Right ventricle myocardium superior (tissue), 1 donor: ENCODE measurements at regions of chr11 and their contacts with region 1.

Region 1: GRCh38 chr11:12673924-12674570 is at the start of gene TEAD1:
- DNase-seq: peak; percentile 96
- ATAC-seq: peak; percentile 98
- total RNA-seq, gene TEAD1: 107 TPM

Region 2: GRCh38 chr11:12319988-12320387 is 354.1 kb before region 1 on chr11:
- intact Hi-C with region 1: loop called (anchors 10 kb)
- DNase-seq: no peak
- ATAC-seq: no peak

Region 3: GRCh38 chr11:12411806-12412727 is 262.0 kb before region 1 on chr11:
- intact Hi-C with region 1: loop called (anchors 10 kb)
- DNase-seq: peak; percentile 68
- ATAC-seq: peak; percentile 83

Region 4: DNA sequence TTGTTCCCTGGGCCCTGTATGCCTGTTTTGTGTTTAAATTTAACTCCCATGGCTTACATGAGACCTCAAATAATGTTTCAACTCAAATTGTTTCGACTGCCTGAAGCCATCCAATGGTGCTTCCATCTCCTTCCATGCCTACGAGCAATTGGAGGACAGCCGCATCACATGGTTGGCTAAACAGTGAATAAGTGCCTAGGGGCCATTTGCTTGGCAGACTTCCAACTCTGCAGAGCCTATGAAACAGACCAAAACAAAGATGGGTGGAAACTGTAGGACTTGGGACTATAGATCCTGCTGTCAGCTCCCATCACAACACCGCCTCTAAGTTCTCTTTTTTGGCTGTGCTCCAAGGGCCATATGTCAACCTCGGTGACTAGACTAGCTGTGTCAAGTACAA is 212.5 kb before region 1 on chr11:
- intact Hi-C with region 1: no loop called
- DNase-seq: no peak
- ATAC-seq: no peak

Region 5: GRCh38 chr11:12746593-12747097 is 72.6 kb after region 1 on chr11:
- intact Hi-C with region 1: loop called (anchors 5 kb)
- DNase-seq: peak; percentile 83
- ATAC-seq: peak; percentile 60

Region 6: DNA sequence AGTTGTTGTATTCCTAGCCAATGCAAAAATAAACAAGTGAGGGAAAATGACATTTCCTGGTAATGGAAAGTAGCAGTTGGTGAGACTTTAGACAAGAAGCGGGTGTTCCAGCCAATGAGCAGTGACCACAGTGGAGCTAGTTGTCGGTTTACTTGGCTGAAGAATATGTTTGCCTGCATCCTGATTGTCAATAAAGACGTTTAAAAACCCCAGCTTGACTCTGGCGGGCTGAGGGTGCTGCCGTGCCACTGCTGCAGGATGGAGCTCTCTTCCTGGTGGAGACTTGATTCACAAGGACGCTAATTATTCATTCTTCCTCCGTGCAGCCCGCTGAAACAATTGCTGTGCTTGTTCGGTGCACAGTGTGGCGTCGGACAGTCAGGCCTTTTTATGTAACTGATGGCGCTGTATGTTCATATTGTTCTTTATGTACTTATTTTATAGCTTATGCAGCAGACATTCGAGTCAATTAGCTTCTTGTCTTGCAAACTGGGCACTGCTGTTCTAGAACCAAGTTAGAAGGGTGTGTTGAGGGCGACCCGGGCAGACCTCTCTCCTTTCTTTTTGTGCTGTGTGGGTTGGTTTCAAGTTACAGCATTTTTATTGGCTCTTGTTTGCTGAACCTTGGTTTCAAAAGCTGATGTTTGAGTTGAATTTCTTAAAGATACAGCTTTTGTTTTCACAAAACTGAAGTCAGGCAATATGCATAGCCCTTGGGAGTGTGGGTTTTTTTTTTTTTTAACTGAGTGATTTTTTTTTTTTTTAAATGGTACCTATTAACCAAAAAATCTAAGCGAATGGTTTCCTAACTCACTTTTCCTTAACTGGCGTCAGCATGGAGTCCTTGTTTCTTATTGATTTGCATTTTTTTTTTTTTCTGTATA is 154.1 kb after region 1 on chr11:
- intact Hi-C with region 1: loop called (anchors 10 kb)
- DNase-seq: no peak
- ATAC-seq: peak; percentile 76

Region 7: GRCh38 chr11:12893787-12894672 is 220.0 kb after region 1 on chr11:
- intact Hi-C with region 1: loop called (anchors 5 kb)
- DNase-seq: peak; percentile 65
- ATAC-seq: no peak